HepG2 (cell line): ENCODE measurements at regions of chr3 and their contacts with region 1.

Region 1: GRCh38 chr3:77254967-77255831 is 215.3 kb downstream of the ROBO2 start:
- DNase-seq: peak; percentile 54
- ATAC-seq: peak; percentile 90
- H3K4me3 ChIP-seq: no peak overlapping the region
- H3K27ac ChIP-seq: no peak overlapping the region
- H3K4me1 ChIP-seq: no peaks in the 10 kb centered on the region
- H3K27me3 ChIP-seq: no peaks in the 10 kb centered on the region; a peak in 1 of 5 replicates
- CTCF ChIP-seq: peak; percentile 78
- EP300 ChIP-seq: no peak
- POLR2A ChIP-seq: no peak
- RAD21 ChIP-seq: peak; percentile 56

Region 2: DNA sequence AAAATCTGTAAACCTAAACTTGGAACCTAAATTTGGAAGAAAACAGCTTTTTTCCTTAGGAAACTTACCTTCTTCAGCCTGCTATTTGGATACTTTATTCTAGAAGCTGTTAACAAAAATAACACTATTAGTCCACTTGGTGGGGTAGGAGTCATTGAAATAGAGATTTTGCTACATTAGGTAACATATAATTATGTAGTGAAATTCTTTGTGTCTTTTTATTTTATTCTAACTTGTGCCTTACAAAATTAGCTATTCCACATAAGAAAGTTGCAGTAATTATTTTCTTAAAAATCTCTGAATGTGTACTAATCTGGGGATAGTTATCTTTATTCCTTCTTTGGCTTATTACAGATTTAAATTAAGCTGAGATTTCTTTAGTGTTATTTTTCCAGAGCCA is 575.7 kb before region 1 on chr3:
- CTCF ChIA-PET with region 1: interaction called, 6 read pairs
- POLR2A ChIA-PET with region 1: no interaction called
- in situ Hi-C with region 1: loop called (anchors 10 kb)
- intact Hi-C with region 1: loop called (anchors 1 kb)
- DNase-seq: peak; percentile 18
- ATAC-seq: no peak
- H3K4me3 ChIP-seq: no peak overlapping the region
- H3K27ac ChIP-seq: no peak overlapping the region
- H3K4me1 ChIP-seq: no peaks in the 10 kb centered on the region; the same call in 1 of the 2 replicates
- H3K27me3 ChIP-seq: no peaks in the 10 kb centered on the region
- CTCF ChIP-seq: peak; percentile 29; the same call in 1 of the 2 replicates
- EP300 ChIP-seq: no peak
- POLR2A ChIP-seq: no peak
- RAD21 ChIP-seq: no peak

Region 3: DNA sequence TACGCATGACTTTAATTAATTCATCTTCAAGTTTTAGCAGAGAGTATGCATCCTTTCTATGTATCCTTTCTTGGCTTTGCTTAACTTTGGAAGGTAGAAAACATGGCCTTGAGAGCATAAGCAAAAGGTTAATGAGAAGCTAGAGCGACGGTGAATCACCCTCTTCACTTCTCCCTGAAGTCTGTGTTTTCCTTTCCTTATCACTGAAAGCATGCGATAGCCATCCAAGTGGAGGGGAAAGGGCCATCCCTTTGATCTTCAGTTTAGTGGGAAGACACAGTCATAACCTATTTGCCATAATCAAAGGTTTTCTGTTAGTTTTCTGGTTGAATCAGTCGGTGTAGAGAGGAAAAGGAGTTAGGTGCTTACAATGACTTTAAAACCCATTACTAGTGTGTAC is 569.3 kb before region 1 on chr3:
- CTCF ChIA-PET with region 1: no interaction called
- POLR2A ChIA-PET with region 1: no interaction called
- in situ Hi-C with region 1: loop called (anchors 10 kb)
- intact Hi-C with region 1: no loop called
- DNase-seq: peak; percentile 93
- ATAC-seq: peak; percentile 99
- H3K4me3 ChIP-seq: no peak overlapping the region; a peak in 1 of 6 replicates
- H3K27ac ChIP-seq: peak overlapping the region; percentile 57
- H3K4me1 ChIP-seq: peaks cover 32% of the 10 kb centered on the region
- H3K27me3 ChIP-seq: no peaks in the 10 kb centered on the region
- CTCF ChIP-seq: no peak
- EP300 ChIP-seq: peak in 1 of 2 experiments; percentile 96; a peak in 2 of 4 replicates
- POLR2A ChIP-seq: no peak
- RAD21 ChIP-seq: no peak

Region 4: DNA sequence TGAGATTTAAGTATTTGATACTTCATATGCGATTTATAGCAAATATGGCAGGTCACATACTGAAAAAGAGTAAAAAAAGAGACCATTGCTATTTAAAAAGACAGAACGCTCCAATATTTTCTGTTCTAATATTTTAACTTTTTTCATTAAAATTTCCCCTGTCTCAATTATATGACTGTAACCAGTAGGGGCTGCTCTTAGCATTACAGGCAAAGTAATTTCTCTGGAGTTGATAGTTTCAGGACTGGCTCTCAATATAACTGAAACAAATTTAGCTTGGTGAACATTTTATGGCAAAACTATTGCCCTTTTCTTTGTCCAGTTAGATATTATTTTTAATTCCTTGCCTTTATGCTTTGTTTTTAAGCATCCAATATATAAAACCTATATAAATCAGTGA is 501.6 kb before region 1 on chr3:
- CTCF ChIA-PET with region 1: interaction called, 5 read pairs
- POLR2A ChIA-PET with region 1: no interaction called
- in situ Hi-C with region 1: no loop called
- intact Hi-C with region 1: loop called (anchors 2 kb)
- DNase-seq: peak; percentile 2
- ATAC-seq: peak; percentile 44; the same call in 1 of the 3 replicates
- H3K4me3 ChIP-seq: no peak overlapping the region
- H3K27ac ChIP-seq: no peak overlapping the region
- H3K4me1 ChIP-seq: no peaks in the 10 kb centered on the region
- H3K27me3 ChIP-seq: no peaks in the 10 kb centered on the region
- CTCF ChIP-seq: peak; percentile 30; the same call in 1 of the 2 replicates
- EP300 ChIP-seq: no peak
- POLR2A ChIP-seq: no peak
- RAD21 ChIP-seq: no peak

Region 5: GRCh38 chr3:77147836-77148578 is 107.2 kb before region 1 on chr3:
- CTCF ChIA-PET with region 1: no interaction called
- POLR2A ChIA-PET with region 1: no interaction called
- in situ Hi-C with region 1: no loop called
- intact Hi-C with region 1: no loop called
- DNase-seq: no peak
- ATAC-seq: no peak
- H3K4me3 ChIP-seq: no peak overlapping the region
- H3K27ac ChIP-seq: no peak overlapping the region
- H3K4me1 ChIP-seq: no peaks in the 10 kb centered on the region
- H3K27me3 ChIP-seq: no peaks in the 10 kb centered on the region
- CTCF ChIP-seq: no peak
- EP300 ChIP-seq: no peak
- POLR2A ChIP-seq: no peak
- RAD21 ChIP-seq: no peak

Region 6: DNA sequence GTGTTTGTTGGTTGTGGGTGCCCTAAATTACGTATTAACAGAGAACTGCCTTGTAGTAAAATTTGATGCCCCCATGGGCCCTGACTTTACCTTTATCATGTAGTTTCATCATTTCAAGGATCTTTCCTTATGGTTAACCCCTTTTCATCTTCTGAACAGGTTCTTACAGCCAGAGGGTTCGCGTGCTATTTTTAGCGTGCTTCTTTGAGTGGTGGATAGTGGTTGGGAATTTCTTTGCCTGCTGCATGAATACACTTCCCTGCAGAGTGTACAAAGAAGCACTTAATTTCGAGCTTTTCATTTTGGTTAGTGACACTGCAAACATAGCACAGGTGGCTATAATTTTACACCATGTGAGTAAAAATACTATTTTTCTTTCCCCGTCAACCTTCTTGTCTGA is 16.5 kb after region 1 on chr3:
- CTCF ChIA-PET with region 1: no interaction called
- POLR2A ChIA-PET with region 1: no interaction called
- in situ Hi-C with region 1: no loop called
- intact Hi-C with region 1: no loop called
- DNase-seq: no peak
- ATAC-seq: no peak
- H3K4me3 ChIP-seq: no peak overlapping the region
- H3K27ac ChIP-seq: no peak overlapping the region
- H3K4me1 ChIP-seq: no peaks in the 10 kb centered on the region
- H3K27me3 ChIP-seq: no peaks in the 10 kb centered on the region
- CTCF ChIP-seq: no peak
- EP300 ChIP-seq: no peak
- POLR2A ChIP-seq: no peak
- RAD21 ChIP-seq: no peak